Thyroid gland (tissue), 4 donors: ENCODE measurements at regions of chr4 and their contacts with region 1.

Region 1: DNA sequence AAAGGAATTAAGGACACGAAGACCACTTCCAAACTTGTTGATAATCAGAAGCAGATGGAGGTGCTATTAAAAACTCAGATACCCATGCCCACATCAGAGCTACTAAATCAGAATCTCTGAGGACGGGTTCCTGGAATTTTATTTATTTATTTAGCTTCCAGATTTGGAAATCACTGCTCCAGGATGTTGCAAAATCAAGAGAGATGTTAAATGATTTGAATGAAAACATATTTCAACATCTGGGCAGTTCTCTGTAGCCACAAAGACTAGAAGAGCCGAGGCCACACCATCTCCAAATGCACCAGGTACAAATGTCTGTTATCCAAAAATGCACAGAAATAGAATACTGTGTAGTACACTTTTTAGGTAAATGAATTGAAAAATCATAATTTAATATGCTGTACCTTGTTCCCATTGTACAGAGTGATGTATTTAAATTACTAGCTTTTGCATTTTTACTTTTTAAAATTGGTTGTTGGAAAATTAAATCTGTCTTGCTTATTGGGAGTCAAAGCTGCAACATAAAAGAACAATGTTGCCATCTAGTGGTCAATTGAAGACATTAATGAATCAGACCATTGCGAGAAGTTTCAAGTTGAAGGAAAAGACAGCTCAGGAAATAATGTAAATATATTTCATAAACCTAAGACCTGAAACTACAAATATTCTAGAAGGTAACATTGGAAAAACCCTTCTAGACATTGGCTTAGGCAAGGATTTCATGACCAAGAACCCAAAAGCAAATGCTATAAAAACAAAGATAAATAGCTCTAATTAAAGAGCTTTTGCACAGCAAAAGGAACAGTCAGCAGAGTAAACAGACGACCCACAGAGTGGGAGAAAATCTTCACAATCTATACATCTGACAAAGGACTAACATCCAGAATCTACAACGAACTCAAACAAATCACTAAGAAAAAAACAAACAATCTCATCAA is 151.3 kb upstream of the TTC29 start:
- DNase-seq: no peak
- H3K4me3 ChIP-seq: no peak overlapping the region
- H3K27ac ChIP-seq: no peak overlapping the region
- H3K4me1 ChIP-seq: peaks cover 0 to 17% of the 10 kb centered on the region in 2 donors
- H3K27me3 ChIP-seq: no peaks in the 10 kb centered on the region
- CTCF ChIP-seq: peak; percentile 44 to 80 (median 66)
- POLR2A ChIP-seq: no peak

Region 2: GRCh38 chr4:146342600-146343192 is 754.2 kb before region 1 on chr4:
- intact Hi-C with region 1: loop called (anchors 10 kb)
- DNase-seq: peak in 1 of 2 donors; percentile 20
- H3K4me3 ChIP-seq: no peak overlapping the region
- H3K27ac ChIP-seq: no peak overlapping the region
- H3K4me1 ChIP-seq: no peaks in the 10 kb centered on the region
- H3K27me3 ChIP-seq: no peaks in the 10 kb centered on the region
- CTCF ChIP-seq: peak in 5 of 6 experiments; percentile 14 to 73 (median 45)
- POLR2A ChIP-seq: no peak

Region 3: DNA sequence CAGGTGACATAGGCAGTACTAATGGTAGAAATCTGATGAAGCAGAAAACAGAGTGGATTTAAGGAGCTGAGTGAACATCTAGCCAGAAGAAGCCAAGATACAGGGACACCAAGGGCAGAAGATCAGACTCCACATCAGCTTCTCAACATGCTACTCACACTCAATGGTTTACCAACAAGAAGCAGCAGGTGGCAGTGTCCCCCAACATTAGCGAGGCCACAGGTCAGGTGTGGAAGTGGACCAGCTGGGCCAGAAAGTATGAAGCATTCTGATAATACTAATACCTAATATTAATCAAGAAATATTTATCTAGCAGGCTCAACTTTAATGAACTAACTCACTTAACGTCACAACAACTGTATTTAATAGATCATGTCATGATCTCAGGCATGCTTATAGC is 77.9 kb before region 1 on chr4:
- intact Hi-C with region 1: loop called (anchors 5 kb)
- DNase-seq: peak; percentile 69 to 73
- H3K4me3 ChIP-seq: no peak overlapping the region
- H3K27ac ChIP-seq: no peak overlapping the region
- H3K4me1 ChIP-seq: peaks cover 0 to 5% of the 10 kb centered on the region in 2 donors
- H3K27me3 ChIP-seq: no peaks in the 10 kb centered on the region
- CTCF ChIP-seq: peak; percentile 30 to 67 (median 58)
- POLR2A ChIP-seq: no peak

Region 4: GRCh38 chr4:147617173-147617840 is 520.4 kb after region 1 on chr4 and contains the start of gene TMEM184C:
- intact Hi-C with region 1: no loop called
- DNase-seq: peak; percentile 99 to 100
- H3K4me3 ChIP-seq: peak within 1 kb of the TSS; percentile 54 to 86 (median 75)
- H3K27ac ChIP-seq: peak within 1 kb of the TSS; percentile 71 to 90 (median 85)
- H3K4me1 ChIP-seq: peaks cover 22 to 37% of the 10 kb centered on the region in 2 donors
- H3K27me3 ChIP-seq: no peaks in the 10 kb centered on the region
- CTCF ChIP-seq: peak in 2 of 6 experiments; percentile 24 to 28
- POLR2A ChIP-seq: peak in 1 of 2 donors; percentile 94
- total RNA-seq, gene TMEM184C: 69.6 to 98.5 (median 82.5) TPM